CD14-positive monocyte (primary cell): ENCODE measurements at regions of chr6 and their contacts with region 1.

Region 1: GRCh38 chr6:131199568-131200272 is 64.5 kb downstream of the AKAP7 start:
- DNase-seq: peak; percentile 14 to 48 (median 32)
- H3K4me3 ChIP-seq: no peak overlapping the region
- H3K4me3 Mint-ChIP-seq: peak overlapping the region; percentile 52 to 57
- H3K27ac ChIP-seq: peak overlapping the region in 1 of 2 donors; percentile 39
- H3K27ac Mint-ChIP-seq: peak overlapping the region in 6 of 7 donors; percentile 62 to 85 (median 69)
- H3K4me1 ChIP-seq: peaks cover 9 to 11% of the 10 kb centered on the region in 2 donors
- H3K4me1 Mint-ChIP-seq: peaks cover 11% of the 10 kb centered on the region
- H3K27me3 ChIP-seq: no peaks in the 10 kb centered on the region
- H3K27me3 Mint-ChIP-seq: no peaks in the 10 kb centered on the region
- CTCF ChIP-seq: peak; percentile 49

Region 2: GRCh38 chr6:131532580-131533039 is 332.9 kb after region 1 on chr6:
- intact Hi-C with region 1: loop called in 1 of 2 experiments (anchors 10 kb)
- DNase-seq: no peak
- H3K4me3 ChIP-seq: no peak overlapping the region
- H3K4me3 Mint-ChIP-seq: no peak overlapping the region
- H3K27ac ChIP-seq: no peak overlapping the region
- H3K27ac Mint-ChIP-seq: no peak overlapping the region
- H3K4me1 ChIP-seq: no peaks in the 10 kb centered on the region
- H3K4me1 Mint-ChIP-seq: peaks cover 8% of the 10 kb centered on the region
- H3K27me3 ChIP-seq: no peaks in the 10 kb centered on the region
- H3K27me3 Mint-ChIP-seq: no peaks in the 10 kb centered on the region
- CTCF ChIP-seq: no peak